ENCODE measurements at regions of chr11 and their contacts with region 1.

Region 1: DNA sequence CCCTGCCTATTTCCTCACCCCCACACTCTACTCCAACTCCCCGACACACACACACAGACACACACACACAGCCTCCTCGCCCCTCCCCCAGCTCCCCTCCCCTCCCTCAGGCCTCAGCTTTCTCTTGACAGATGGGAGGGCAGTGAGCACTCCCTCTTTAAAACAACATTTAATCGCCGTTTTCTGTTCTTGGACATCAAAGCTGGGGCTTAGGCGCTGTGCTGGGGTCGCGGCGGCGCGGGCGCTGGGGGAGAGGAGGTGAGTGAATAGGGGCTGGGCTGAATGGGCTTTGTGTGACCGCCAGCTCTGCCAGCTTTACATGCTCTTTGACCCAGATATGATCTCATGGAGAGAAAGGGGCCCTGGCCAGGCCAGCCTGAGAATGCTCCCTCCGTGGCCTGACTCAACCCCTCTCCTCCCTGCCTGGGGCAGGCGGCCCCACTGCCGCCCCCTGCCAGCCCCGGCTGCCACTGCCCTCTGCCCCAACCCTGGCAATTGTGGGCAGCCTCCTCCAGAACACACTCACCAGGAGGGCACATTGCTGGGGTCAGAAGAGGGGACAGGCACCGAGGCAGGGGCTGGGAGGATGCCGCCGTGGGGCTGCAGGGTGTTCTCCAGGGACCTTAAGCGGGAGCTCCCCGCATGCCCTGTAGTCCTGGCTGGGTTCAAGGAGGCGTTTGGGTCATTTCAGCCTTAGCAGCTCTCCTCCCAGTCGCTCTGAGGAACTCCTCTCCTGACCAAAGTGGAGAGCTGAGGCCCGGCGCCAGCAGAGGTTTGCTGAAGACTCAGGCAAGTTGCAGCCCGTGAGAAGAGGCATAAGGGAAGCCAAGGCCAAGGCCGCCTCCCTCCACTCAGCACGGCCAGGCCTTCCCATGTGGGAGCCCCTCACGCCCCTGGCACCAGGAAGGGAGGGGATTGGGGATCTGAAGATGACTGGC is 38.3 kb upstream of the NNMT start:
- DNase-seq: no peak
- ATAC-seq: no peak
- H3K4me3 ChIP-seq: no peak overlapping the region
- H3K4me3 Mint-ChIP-seq: no peak overlapping the region
- H3K27ac ChIP-seq: no peak overlapping the region
- H3K27ac Mint-ChIP-seq: no peak overlapping the region
- H3K4me1 ChIP-seq: peaks cover 0 to 4% of the 10 kb centered on the region in 2 experiments
- H3K4me1 Mint-ChIP-seq: peaks cover 0 to 13% (median 2%) of the 10 kb centered on the region in 3 donors
- H3K27me3 ChIP-seq: no peaks in the 10 kb centered on the region
- H3K27me3 Mint-ChIP-seq: no peaks in the 10 kb centered on the region

Region 2: DNA sequence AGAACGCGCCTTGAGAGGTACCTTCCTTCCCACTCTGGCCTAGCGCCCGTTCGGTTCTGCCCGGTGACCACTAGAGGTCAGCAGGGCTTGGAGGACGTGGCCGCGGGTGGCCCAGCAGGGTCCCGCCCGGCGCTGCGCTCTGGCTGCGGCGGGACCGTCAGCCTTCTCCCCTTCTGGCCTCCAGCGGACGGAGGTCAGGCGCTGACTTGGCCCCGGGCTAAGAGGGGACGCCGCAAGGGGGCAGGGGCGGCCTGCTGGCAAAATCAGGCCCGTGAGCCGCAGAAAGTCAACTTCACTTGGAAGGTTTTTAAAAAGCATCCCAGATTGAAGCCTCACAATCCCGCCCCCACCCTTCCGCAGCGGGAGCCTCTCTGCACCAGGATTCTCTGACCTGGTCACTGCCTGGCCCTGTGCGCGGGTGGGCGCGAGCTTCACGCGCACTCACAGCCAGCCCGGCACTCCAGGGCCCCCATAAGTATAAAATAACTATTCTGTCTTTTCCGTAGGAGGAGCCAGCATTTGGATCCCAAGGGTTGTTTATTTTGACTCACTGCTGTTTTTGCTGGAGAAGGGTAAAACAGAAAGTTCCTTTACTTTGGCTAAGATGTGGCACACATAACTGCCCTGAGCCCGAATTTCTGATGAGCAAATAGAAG is 221.6 kb before region 1 on chr11:
- CTCF ChIA-PET with region 1: interaction called, 6 to 40 read pairs
- POLR2A ChIA-PET with region 1: no interaction called
- DNase-seq: peak in 34 of 35 experiments; percentile 8 to 68 (median 38)
- ATAC-seq: peak; percentile 73 to 86 (median 80)
- H3K4me3 ChIP-seq: peak overlapping the region in 1 of 2 donors; percentile 51
- H3K4me3 Mint-ChIP-seq: peak overlapping the region; percentile 2 to 35 (median 22)
- H3K27ac ChIP-seq: no peak overlapping the region
- H3K27ac Mint-ChIP-seq: no peak overlapping the region
- H3K4me1 ChIP-seq: peaks cover 2 to 9% of the 10 kb centered on the region in 2 experiments
- H3K4me1 Mint-ChIP-seq: peaks cover 4 to 7% (median 5%) of the 10 kb centered on the region in 3 donors
- H3K27me3 ChIP-seq: peaks cover 0 to 17% of the 10 kb centered on the region in 2 experiments
- H3K27me3 Mint-ChIP-seq: peaks cover 7 to 8% of the 10 kb centered on the region in 2 donors

Region 3: DNA sequence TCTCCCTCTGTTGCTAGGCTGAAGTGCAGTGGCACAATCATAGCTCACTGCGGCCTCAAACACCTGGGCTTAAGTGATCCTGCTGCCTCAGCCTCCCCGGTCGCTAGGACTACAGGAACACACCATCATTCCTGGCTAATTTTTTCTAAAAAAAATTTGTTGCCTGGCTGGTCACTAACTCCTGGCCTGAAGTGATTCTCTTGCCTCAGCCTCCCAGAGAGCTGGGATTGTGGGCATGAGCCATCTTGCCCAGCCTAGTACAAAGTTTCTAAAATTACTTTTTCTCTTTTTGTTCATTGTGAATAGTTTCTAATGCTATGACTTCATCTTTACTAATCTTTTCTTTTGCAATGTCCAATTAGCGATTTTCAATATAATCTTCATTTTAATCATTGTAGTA is 155.1 kb after region 1 on chr11:
- CTCF ChIA-PET with region 1: no interaction called
- POLR2A ChIA-PET with region 1: no interaction called
- DNase-seq: no peak
- ATAC-seq: no peak
- H3K4me3 ChIP-seq: no peak overlapping the region
- H3K4me3 Mint-ChIP-seq: no peak overlapping the region
- H3K27ac ChIP-seq: no peak overlapping the region
- H3K27ac Mint-ChIP-seq: no peak overlapping the region
- H3K4me1 ChIP-seq: no peaks in the 10 kb centered on the region
- H3K4me1 Mint-ChIP-seq: no peaks in the 10 kb centered on the region
- H3K27me3 ChIP-seq: no peaks in the 10 kb centered on the region
- H3K27me3 Mint-ChIP-seq: no peaks in the 10 kb centered on the region